ENCODE measurements at regions of chr11 and their contacts with region 1.

Region 1: GRCh38 chr11:8688414-8689362 is 6.1 kb downstream of the RPL27A start:
- DNase-seq: peak; percentile 50 to 86 (median 61)
- ATAC-seq: peak; percentile 92
- H3K4me3 ChIP-seq: peak overlapping the region; percentile 80
- H3K4me3 Mint-ChIP-seq: peak overlapping the region; percentile 89 to 99 (median 96)
- H3K27ac ChIP-seq: peak overlapping the region; percentile 85
- H3K27ac Mint-ChIP-seq: peak overlapping the region; percentile 90 to 99 (median 96)
- H3K4me1 ChIP-seq: peaks cover 15 to 17% of the 10 kb centered on the region in 2 donors
- H3K4me1 Mint-ChIP-seq: peaks cover 20 to 63% (median 45%) of the 10 kb centered on the region in 7 donors
- H3K27me3 ChIP-seq: no peaks in the 10 kb centered on the region
- H3K27me3 Mint-ChIP-seq: no peaks in the 10 kb centered on the region

Region 2: DNA sequence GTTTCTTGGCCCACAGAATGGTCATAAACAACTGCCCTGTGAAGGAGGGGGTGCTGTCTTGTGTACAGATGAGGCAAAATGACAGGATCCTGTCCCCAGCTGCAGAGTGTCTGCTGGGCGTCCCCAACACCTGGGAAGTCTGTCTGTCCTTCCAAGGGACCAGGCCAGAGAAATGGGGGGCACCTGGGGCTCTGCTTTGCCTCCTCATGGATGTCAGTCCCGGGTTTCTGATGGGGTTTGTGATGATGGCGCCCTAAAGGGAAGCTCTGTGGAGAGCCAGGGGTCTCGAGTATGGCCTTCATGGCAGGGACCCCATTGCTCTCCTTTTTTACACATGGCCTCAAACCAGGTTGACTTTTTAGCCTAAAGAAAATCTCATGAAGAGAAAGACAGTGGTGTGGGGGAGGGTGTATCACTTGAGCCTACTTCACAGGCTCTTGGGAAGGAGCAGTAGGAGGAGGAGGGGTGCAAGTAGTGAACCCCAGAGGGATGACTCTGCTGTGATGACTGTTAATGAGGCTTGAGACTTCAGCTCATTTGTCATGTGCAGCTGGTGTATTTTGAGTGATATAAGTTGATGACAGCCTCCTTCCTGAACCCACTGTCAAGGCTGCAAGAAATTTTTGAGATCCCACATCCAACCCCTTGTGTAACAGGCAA is 648.3 kb before region 1 on chr11:
- CTCF ChIA-PET with region 1: no interaction called
- POLR2A ChIA-PET with region 1: no interaction called
- intact Hi-C with region 1: no loop called
- DNase-seq: no peak
- ATAC-seq: no peak
- H3K4me3 ChIP-seq: no peak overlapping the region
- H3K4me3 Mint-ChIP-seq: no peak overlapping the region
- H3K27ac ChIP-seq: no peak overlapping the region
- H3K27ac Mint-ChIP-seq: no peak overlapping the region
- H3K4me1 ChIP-seq: no peaks in the 10 kb centered on the region
- H3K4me1 Mint-ChIP-seq: no peaks in the 10 kb centered on the region
- H3K27me3 ChIP-seq: no peaks in the 10 kb centered on the region
- H3K27me3 Mint-ChIP-seq: peaks cover 8 to 28% (median 18%) of the 10 kb centered on the region in 5 donors

Region 3: DNA sequence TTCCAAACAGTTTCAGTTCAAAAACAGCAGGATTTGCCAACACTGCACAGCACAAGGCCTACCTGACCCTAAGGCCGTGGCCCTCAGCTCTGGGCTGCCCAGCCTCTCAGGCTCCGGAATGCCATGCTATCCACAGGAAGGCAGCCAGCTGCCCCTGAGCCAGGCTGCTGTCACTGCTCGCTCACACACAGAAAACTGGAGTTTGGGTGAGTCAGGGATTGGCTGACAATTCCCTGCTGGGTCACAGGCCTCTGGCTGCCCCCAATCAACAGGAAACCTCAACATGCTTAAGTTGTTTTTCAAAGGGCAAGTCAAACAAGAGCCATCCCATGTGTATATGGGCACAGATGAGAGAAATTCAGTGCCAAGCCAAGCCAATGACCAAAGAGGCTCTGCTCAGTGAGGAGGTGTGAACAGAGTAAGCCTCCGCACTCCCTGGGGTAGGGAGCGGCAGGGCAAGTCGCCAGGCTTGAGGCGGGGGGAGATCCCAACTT is 44.1 kb after region 1 on chr11:
- CTCF ChIA-PET with region 1: no interaction called
- POLR2A ChIA-PET with region 1: no interaction called
- intact Hi-C with region 1: no loop called
- DNase-seq: no peak
- ATAC-seq: no peak
- H3K4me3 ChIP-seq: no peak overlapping the region
- H3K4me3 Mint-ChIP-seq: no peak overlapping the region
- H3K27ac ChIP-seq: no peak overlapping the region
- H3K27ac Mint-ChIP-seq: no peak overlapping the region
- H3K4me1 ChIP-seq: no peaks in the 10 kb centered on the region
- H3K4me1 Mint-ChIP-seq: no peaks in the 10 kb centered on the region
- H3K27me3 ChIP-seq: peaks cover 0 to 4% of the 10 kb centered on the region in 2 donors
- H3K27me3 Mint-ChIP-seq: peaks cover 0 to 2% (median 0%) of the 10 kb centered on the region in 5 donors

Region 4: GRCh38 chr11:9003573-9004309 is 315.1 kb after region 1 on chr11 and contains the start of gene NRIP3:
- CTCF ChIA-PET with region 1: no interaction called
- POLR2A ChIA-PET with region 1: no interaction called
- intact Hi-C with region 1: loop called in 1 of 2 experiments (anchors 5 kb)
- DNase-seq: peak; percentile 72 to 86 (median 80)
- ATAC-seq: peak; percentile 89
- H3K4me3 ChIP-seq: peak within 1 kb of the TSS; percentile 32
- H3K4me3 Mint-ChIP-seq: peak within 1 kb of the TSS; percentile 81 to 90 (median 86)
- H3K27ac ChIP-seq: no peak within 1 kb of the TSS
- H3K27ac Mint-ChIP-seq: peak within 1 kb of the TSS; percentile 12 to 87 (median 62)
- H3K4me1 ChIP-seq: peaks cover 8 to 12% of the 10 kb centered on the region in 2 donors
- H3K4me1 Mint-ChIP-seq: peaks cover 13 to 31% (median 20%) of the 10 kb centered on the region in 7 donors
- H3K27me3 ChIP-seq: peaks cover 3 to 8% of the 10 kb centered on the region in 2 donors
- H3K27me3 Mint-ChIP-seq: peaks cover 30 to 56% (median 41%) of the 10 kb centered on the region in 5 donors
- total RNA-seq, gene NRIP3: 0.59 to 11.0 (median 3.4) TPM

Measured in naive thymus-derived CD4-positive, alpha-beta T cell (primary cell).